Dendritic cell treated with granulocyte-macrophage colony-stimulating factor and Interleukin-4, amounts not matched to agents 40 ng/mL and 50 ng/mL, for 4 days (primary cell): ENCODE measurements at regions of chr5 and their contacts with region 1.

Region 1: GRCh38 chr5:87298692-87299362 is 31.1 kb downstream of the RASA1 start:
- H3K4me3 Mint-ChIP-seq: no peak overlapping the region
- H3K27ac Mint-ChIP-seq: peak overlapping the region; percentile 86
- H3K4me1 Mint-ChIP-seq: peaks cover 58% of the 10 kb centered on the region
- H3K27me3 Mint-ChIP-seq: no peaks in the 10 kb centered on the region

Region 2: DNA sequence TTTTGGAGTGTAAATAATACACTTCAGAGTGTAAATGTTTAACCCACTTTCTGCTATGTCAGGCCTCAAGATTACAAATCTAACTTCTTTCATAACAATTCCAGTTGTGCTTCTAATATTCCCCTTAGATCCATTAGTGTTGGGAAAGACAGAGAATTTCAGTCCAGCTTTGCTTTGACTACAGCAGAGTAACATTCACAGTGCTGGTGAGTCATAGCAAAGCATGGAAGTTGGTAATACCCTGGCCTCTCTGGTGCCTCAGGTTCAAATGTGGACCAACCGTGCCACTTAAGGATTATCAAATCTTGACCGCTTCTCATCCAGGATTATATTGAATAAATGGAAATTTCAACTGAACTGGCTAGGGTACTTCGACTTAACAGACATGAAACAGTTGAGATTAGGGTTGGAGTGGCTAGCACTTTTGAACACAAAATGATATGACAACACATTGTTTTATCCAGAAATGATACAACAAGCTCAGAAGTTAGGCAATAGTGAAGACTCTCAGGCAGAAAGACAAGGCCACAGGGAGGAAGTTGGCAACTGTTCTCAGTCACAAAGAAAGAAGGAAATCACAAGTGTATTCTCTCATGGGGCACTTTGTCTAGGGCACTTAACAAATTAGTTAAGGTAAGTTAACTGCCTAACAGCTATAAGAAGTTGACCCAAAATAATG is 55.5 kb before region 1 on chr5:
- intact Hi-C with region 1: no loop called
- H3K4me3 Mint-ChIP-seq: no peak overlapping the region
- H3K27ac Mint-ChIP-seq: no peak overlapping the region
- H3K4me1 Mint-ChIP-seq: peaks cover 23% of the 10 kb centered on the region
- H3K27me3 Mint-ChIP-seq: no peaks in the 10 kb centered on the region

Region 3: DNA sequence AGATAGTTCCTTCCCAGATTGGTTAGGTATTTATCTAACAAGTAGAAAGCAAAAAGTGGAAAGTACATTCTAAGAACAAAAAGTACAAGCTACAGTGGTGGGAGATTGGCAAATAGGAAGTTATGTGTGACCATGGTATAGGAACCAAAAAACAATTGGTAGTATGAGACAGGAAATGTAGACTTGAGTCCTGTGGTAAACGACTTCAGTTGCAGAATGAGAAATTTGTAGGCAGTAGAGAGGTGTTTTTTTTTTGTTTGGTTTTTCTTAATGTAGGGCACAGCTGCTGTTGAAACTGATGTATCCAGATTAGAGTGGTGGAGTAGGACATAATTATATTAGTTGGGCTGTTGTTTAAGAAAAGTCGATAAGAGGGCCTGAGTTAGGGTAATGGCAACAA is 41.9 kb after region 1 on chr5:
- intact Hi-C with region 1: loop called (anchors 5 kb)
- H3K4me3 Mint-ChIP-seq: no peak overlapping the region
- H3K27ac Mint-ChIP-seq: no peak overlapping the region
- H3K4me1 Mint-ChIP-seq: peaks cover 13% of the 10 kb centered on the region
- H3K27me3 Mint-ChIP-seq: no peaks in the 10 kb centered on the region